CD8-positive, alpha-beta memory T cell (primary cell): ENCODE measurements at regions of chr12 and their contacts with region 1.

Region 1: DNA sequence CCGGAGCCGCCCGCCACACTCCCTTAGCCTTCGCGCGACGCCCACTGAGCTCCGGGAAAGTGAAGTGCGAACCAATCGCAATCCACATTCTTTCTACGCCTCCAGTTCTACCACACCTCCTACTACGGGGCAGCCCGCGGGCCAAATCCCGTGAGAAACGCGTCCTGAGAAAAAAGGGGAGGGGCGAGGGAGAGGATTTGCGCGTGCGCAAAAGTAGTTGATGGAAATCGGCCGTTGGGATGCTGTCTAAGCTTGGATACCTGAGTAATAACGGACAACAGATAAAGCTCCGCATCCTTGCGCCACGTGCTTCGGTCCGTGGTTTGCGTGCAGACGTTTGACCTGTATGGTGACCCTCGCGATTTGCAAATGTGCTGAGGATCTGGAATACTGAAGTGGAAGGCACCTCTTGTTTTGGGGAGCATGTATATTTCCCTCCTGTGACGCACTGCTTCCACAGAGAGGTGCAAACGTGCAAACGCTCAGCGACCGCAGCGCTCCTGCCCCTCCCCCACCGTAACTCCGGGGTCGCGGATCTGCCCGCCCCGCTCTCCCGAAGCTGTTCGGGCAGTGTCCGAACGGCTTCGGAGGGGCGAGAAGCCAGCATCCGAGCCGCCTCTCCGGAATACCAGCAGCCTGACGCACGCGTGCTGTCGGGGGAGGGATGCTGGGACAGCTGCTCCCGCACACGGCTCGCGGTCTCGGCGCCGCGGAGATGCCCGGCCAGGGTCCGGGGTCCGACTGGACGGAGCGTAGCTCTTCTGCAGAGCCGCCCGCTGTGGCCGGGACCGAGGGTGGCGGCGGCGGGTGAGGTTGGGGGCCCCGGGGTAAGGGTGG is at the starts of genes FAM216A and GPN3:
- DNase-seq: peak; percentile 90 to 98 (median 96)
- H3K4me3 ChIP-seq: peak within 1 kb of the TSS; percentile 93
- H3K4me3 Mint-ChIP-seq: peak within 1 kb of the TSS; percentile 92 to 99 (median 98)
- H3K27ac ChIP-seq: peak within 1 kb of the TSS; percentile 78
- H3K27ac Mint-ChIP-seq: peak within 1 kb of the TSS; percentile 82 to 99 (median 98)
- H3K4me1 ChIP-seq: peaks cover 25% of the 10 kb centered on the region
- H3K4me1 Mint-ChIP-seq: peaks cover 18 to 45% (median 37%) of the 10 kb centered on the region in 3 donors
- H3K27me3 ChIP-seq: no peaks in the 10 kb centered on the region
- H3K27me3 Mint-ChIP-seq: peaks cover 0 to 2% of the 10 kb centered on the region in 2 donors
- total RNA-seq, gene FAM216A: 43.2 to 44.0 TPM
- total RNA-seq, gene GPN3: 59.4 TPM

Region 2: DNA sequence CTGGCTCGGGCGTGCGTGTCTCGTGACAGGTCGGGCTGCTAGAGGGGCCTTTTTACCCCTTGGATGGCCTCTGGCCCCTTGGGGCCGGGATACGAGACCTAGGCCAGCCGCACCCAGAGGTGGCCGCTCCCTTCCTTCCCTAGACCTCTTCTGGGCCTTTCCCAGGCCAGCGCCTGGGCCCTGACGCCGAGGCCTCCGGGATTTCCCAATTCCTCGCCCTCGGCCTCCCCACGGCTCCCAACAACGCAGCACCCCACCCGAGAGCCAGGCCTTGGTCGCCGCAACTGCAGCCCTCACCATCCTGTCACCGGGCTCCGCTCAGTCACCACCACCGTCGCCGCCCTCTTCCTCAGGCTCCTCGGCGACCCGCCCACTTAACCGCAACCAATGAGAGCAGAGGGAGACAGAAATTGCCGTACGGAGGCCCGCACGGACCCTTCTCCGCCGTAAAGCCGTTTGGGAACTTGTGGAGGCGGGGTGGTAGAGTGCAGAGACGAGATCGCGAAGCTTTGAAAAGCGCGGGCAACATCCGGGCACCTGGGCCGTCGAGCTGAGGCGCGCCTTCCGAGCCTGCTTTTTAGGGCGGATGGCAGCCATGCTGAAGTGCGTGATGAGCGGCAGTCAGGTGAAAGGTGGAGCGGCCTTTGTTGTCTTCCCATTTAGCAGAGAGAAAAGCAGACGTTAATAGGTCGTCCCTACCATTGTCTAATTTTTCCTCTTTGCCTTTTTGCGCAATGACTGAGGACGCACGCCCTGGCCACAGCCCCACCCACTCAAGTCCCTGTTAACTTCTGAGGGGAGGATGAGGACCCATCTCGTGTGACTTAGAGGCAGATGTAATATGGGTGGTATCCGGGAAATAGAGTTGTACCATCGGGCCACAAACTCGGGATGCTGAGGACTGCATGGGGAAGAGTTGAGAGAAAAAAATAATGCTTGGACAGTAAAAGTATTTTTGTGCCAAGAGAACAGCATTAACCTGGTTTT is 33.6 kb after region 1 on chr12 and contains the starts of genes RAD9B and VPS29:
- CTCF ChIA-PET with region 1: interaction called, 27 read pairs
- POLR2A ChIA-PET with region 1: interaction called, 39 read pairs
- DNase-seq: peak; percentile 98 to 99 (median 99)
- H3K4me3 ChIP-seq: peak within 1 kb of the TSS; percentile 92
- H3K4me3 Mint-ChIP-seq: peak within 1 kb of the TSS; percentile 97 to 99 (median 97)
- H3K27ac ChIP-seq: peak within 1 kb of the TSS; percentile 86
- H3K27ac Mint-ChIP-seq: peak within 1 kb of the TSS; percentile 96 to 98 (median 97)
- H3K4me1 ChIP-seq: peaks cover 29% of the 10 kb centered on the region
- H3K4me1 Mint-ChIP-seq: peaks cover 36 to 50% (median 44%) of the 10 kb centered on the region in 3 donors
- H3K27me3 ChIP-seq: no peaks in the 10 kb centered on the region
- H3K27me3 Mint-ChIP-seq: peaks cover 0 to 3% of the 10 kb centered on the region in 2 donors
- total RNA-seq, gene RAD9B: 0.74 to 1.9 TPM
- total RNA-seq, gene VPS29: 86.4 to 88.3 TPM